ENCODE measurements at regions of chr14 and their contacts with region 1.

Region 1: DNA sequence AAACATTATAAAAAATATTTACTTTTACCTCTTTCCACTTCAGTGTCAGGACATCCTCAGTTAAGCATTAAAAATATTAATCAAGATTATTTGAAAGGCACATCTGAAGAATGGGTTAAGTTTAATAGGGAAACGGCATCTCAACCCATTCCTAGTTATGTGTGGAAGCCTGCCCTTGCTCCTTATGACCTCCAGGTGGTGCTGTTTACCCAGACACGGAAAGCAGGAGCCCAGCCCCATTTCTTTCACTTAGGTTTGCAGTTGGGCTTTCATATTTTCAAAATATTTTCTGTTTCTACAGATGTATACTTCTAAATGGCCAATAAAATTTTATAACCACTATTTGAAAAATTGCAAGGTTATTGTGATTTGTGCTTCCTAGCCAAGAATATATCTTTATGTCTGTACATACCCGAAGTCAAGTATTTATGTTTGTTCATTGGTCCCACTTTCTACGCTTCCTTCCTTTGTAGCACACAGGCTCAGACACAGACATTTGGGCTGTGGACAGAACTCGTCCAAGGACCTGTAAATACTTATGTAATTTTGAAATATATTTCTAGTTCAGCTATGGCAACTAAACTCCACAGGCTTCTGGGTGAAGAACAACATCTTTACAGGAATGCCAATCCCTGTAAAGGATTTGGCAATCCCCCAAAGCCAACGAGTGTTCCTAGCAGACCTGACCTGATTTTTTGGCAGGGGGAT is 247.1 kb downstream of the AKAP6 start:
- DNase-seq: peak; percentile 55
- H3K4me3 ChIP-seq: no peak overlapping the region
- H3K27ac ChIP-seq: no peak overlapping the region
- H3K4me1 ChIP-seq: no peaks in the 10 kb centered on the region
- H3K27me3 ChIP-seq: no peaks in the 10 kb centered on the region
- CTCF ChIP-seq: peak; percentile 98

Region 2: GRCh38 chr14:31895206-31895605 is 681.0 kb before region 1 on chr14:
- intact Hi-C with region 1: no loop called
- DNase-seq: no peak
- H3K4me3 ChIP-seq: no peak overlapping the region
- H3K27ac ChIP-seq: no peak overlapping the region
- H3K4me1 ChIP-seq: no peaks in the 10 kb centered on the region
- H3K27me3 ChIP-seq: no peaks in the 10 kb centered on the region
- CTCF ChIP-seq: no peak

Region 3: GRCh38 chr14:33432407-33433023 is 856.3 kb after region 1 on chr14:
- intact Hi-C with region 1: loop called (anchors 10 kb)
- DNase-seq: no peak
- H3K4me3 ChIP-seq: no peak overlapping the region
- H3K27ac ChIP-seq: no peak overlapping the region
- H3K4me1 ChIP-seq: no peaks in the 10 kb centered on the region
- H3K27me3 ChIP-seq: no peaks in the 10 kb centered on the region
- CTCF ChIP-seq: peak; percentile 47

Region 4: GRCh38 chr14:33792720-33793368 is 1216.6 kb after region 1 on chr14:
- intact Hi-C with region 1: loop called (anchors 5 kb)
- DNase-seq: peak; percentile 76
- H3K4me3 ChIP-seq: no peak overlapping the region
- H3K27ac ChIP-seq: no peak overlapping the region
- H3K4me1 ChIP-seq: no peaks in the 10 kb centered on the region
- H3K27me3 ChIP-seq: no peaks in the 10 kb centered on the region
- CTCF ChIP-seq: peak; percentile 89

Region 5: GRCh38 chr14:34322940-34323418 is 1746.7 kb after region 1 on chr14:
- intact Hi-C with region 1: loop called (anchors 10 kb)
- DNase-seq: peak; percentile 80
- H3K4me3 ChIP-seq: no peak overlapping the region
- H3K27ac ChIP-seq: no peak overlapping the region
- H3K4me1 ChIP-seq: peaks cover 3% of the 10 kb centered on the region
- H3K27me3 ChIP-seq: no peaks in the 10 kb centered on the region
- CTCF ChIP-seq: peak; percentile 55

Measured in colonic mucosa (tissue), 4 donors.